ENCODE measurements at regions of chr2 and their contacts with region 1.

Region 1: DNA sequence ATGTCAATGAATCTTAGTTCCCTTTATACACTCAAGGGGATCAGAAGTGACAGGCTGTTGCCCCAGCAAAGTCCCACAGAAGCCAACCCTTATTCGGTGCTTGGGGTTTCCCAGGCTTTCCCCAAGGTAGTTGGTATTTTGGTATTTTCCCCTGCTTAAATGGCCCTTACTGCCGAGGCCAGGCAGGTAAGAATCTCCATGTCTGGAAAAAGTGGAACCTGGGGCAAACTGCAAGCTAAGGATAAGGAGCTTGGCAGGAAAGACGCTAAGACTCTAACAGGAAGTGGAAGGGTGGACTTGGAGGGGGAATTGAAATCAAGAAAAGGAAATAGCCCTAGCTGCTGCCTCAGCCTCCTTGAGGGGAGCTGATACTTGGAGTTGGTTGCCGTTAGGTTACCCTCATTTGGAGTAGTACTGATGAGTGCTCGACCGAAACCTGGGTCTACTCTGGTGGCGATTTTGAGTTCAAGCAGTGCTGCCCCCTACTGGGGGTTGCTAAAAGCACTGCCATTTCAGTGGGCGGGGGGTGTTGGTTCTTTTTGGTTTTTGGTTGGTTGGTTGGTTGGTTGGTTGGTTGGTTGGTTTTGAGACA is 3.3 kb upstream of the GPBAR1 start:
- DNase-seq: peak; percentile 56
- ATAC-seq: peak; percentile 90
- H3K4me3 ChIP-seq: no peak overlapping the region
- H3K27ac ChIP-seq: peak overlapping the region; percentile 31
- H3K4me1 ChIP-seq: peaks cover 31% of the 10 kb centered on the region
- H3K27me3 ChIP-seq: no peaks in the 10 kb centered on the region
- CTCF ChIP-seq: peak; percentile 58 to 77 (median 76)
- EP300 ChIP-seq: no peak
- POLR2A ChIP-seq: no peak
- RAD21 ChIP-seq: peak; percentile 51

Region 2: DNA sequence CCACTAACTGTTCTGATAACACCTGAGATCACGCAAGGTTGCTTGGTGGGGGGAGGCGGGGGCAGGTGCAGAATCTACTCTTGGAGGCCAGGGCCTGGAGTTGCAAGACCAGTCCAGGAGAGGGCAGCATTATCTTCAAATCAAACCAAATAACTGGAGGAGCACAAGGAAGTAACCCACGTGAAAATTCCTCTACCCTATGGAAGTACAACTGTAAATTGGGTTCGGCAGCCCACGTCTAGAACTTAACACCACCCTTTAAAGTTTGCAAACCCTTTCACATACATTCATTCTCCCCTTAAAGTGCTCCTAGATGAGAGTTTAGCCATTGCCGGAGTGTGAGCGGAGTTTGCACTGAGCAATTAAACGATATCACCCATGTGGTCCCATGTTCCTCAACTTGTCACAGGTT is 71.1 kb before region 1 on chr2:
- CTCF ChIA-PET with region 1: interaction called, 25 read pairs
- POLR2A ChIA-PET with region 1: no interaction called
- RAD21 ChIA-PET with region 1: interaction called, 3 read pairs
- SMC1A ChIA-PET with region 1: interaction called, 15 read pairs
- in situ Hi-C with region 1: loop called (anchors 5 kb)
- intact Hi-C with region 1: loop called (anchors 1 kb)
- DNase-seq: peak; percentile 25
- ATAC-seq: peak; percentile 96
- H3K4me3 ChIP-seq: no peak overlapping the region
- H3K27ac ChIP-seq: no peak overlapping the region
- H3K4me1 ChIP-seq: no peaks in the 10 kb centered on the region
- H3K27me3 ChIP-seq: peaks cover 0 to 1% of the 10 kb centered on the region in 2 experiments; a peak in 3 of 4 replicates
- CTCF ChIP-seq: peak; percentile 82 to 86 (median 85)
- EP300 ChIP-seq: no peak
- POLR2A ChIP-seq: no peak
- RAD21 ChIP-seq: peak; percentile 78

Region 3: GRCh38 chr2:218229239-218229638 is 28.2 kb before region 1 on chr2:
- CTCF ChIA-PET with region 1: interaction called, 18 read pairs
- POLR2A ChIA-PET with region 1: interaction called, 5 read pairs
- RAD21 ChIA-PET with region 1: interaction called, 14 read pairs
- SMC1A ChIA-PET with region 1: interaction called, 21 read pairs
- in situ Hi-C with region 1: no loop called
- intact Hi-C with region 1: no loop called
- DNase-seq: peak; percentile 88
- ATAC-seq: peak; percentile 93
- H3K4me3 ChIP-seq: peak overlapping the region; percentile 21
- H3K27ac ChIP-seq: peak overlapping the region; percentile 82
- H3K4me1 ChIP-seq: peaks cover 26% of the 10 kb centered on the region
- H3K27me3 ChIP-seq: no peaks in the 10 kb centered on the region
- CTCF ChIP-seq: no peak
- EP300 ChIP-seq: no peak
- POLR2A ChIP-seq: no peak
- RAD21 ChIP-seq: no peak

Region 4: DNA sequence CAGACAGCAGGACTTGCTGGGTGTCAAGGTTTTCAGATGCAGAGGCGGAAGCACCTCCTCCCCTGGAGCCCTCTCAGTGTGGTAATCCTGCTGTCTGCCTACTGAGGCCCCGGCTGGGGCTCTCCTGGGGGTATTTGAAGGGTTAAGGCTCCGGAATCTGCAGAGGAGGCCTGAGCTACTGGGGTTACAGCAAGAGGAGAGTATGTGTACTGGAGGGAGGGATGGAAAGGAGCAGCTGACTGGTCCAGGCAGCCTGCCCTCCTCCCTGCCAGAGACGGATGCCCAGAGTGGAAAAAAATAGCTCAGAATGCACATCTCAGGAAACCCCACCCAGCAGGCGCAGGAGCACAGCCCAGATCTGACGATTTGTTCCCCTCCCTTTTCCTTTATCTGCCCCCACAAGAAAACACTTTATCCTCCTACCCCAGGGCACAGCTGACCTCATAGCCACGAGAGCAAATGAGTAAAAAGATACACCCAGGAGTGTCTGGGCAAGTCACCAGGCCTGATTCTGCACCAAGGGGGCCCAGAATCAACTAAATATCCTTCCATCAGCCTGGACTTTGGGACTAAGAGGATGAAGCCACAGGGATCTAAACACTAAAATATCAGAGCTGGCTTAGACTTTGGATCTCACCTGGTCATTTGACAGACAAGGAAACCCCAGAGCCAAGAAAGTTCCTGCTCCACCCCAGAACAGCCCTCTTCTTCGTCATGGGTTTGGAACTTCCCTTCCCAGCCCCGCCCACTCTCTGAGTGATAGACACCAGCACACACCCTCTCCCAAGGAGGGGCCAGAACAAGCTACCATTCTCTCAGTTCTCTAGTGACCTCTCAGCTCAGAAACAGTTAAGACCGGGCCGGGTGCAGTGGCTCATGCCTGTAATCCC is 29.3 kb after region 1 on chr2:
- CTCF ChIA-PET with region 1: interaction called, 11 read pairs
- POLR2A ChIA-PET with region 1: interaction called, 5 read pairs
- RAD21 ChIA-PET with region 1: interaction called, 3 read pairs
- SMC1A ChIA-PET with region 1: interaction called, 3 read pairs
- in situ Hi-C with region 1: no loop called
- intact Hi-C with region 1: no loop called
- DNase-seq: peak; percentile 72
- ATAC-seq: peak; percentile 76
- H3K4me3 ChIP-seq: peak overlapping the region; percentile 64
- H3K27ac ChIP-seq: peak overlapping the region; percentile 95
- H3K4me1 ChIP-seq: peaks cover 55% of the 10 kb centered on the region
- H3K27me3 ChIP-seq: no peaks in the 10 kb centered on the region
- CTCF ChIP-seq: no peak
- EP300 ChIP-seq: no peak
- POLR2A ChIP-seq: peak; percentile 57; the same call in 1 of the 2 replicates
- RAD21 ChIP-seq: no peak

Region 5: DNA sequence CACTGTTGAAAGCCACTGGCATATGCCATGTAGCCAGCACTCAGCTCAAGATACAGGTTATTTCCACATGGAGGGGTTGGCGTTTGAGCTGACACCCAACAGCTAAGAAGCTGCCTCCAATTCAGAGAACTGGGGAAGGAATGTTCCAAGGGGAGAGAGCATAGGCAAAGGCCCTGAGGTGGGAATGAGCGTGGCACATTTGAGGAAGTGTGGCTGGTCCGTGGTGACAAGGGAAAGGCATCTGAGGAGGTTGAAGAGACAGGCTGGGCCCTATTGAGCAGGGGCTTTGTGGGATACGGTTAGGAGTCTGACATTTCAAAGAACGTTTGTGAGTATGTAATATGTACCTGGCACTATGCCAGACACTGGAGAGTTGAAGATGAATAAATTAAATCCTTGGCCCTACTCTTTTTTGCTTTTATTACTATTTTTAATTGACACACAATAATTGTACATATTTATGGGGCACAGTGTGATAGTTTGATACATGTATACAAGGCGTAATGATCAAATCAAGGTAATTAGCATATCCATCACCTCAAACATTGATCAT is 62.4 kb after region 1 on chr2:
- CTCF ChIA-PET with region 1: no interaction called
- POLR2A ChIA-PET with region 1: no interaction called
- RAD21 ChIA-PET with region 1: no interaction called
- SMC1A ChIA-PET with region 1: no interaction called
- in situ Hi-C with region 1: no loop called
- intact Hi-C with region 1: no loop called
- DNase-seq: no peak
- ATAC-seq: no peak
- H3K4me3 ChIP-seq: no peak overlapping the region
- H3K27ac ChIP-seq: no peak overlapping the region
- H3K4me1 ChIP-seq: peaks cover 9% of the 10 kb centered on the region
- H3K27me3 ChIP-seq: no peaks in the 10 kb centered on the region
- CTCF ChIP-seq: no peak
- EP300 ChIP-seq: no peak
- POLR2A ChIP-seq: no peak
- RAD21 ChIP-seq: no peak

Measured in GM12878 (cell line).